H1 (cell line): ENCODE measurements at regions of chr12 and their contacts with region 1.

Region 1: DNA sequence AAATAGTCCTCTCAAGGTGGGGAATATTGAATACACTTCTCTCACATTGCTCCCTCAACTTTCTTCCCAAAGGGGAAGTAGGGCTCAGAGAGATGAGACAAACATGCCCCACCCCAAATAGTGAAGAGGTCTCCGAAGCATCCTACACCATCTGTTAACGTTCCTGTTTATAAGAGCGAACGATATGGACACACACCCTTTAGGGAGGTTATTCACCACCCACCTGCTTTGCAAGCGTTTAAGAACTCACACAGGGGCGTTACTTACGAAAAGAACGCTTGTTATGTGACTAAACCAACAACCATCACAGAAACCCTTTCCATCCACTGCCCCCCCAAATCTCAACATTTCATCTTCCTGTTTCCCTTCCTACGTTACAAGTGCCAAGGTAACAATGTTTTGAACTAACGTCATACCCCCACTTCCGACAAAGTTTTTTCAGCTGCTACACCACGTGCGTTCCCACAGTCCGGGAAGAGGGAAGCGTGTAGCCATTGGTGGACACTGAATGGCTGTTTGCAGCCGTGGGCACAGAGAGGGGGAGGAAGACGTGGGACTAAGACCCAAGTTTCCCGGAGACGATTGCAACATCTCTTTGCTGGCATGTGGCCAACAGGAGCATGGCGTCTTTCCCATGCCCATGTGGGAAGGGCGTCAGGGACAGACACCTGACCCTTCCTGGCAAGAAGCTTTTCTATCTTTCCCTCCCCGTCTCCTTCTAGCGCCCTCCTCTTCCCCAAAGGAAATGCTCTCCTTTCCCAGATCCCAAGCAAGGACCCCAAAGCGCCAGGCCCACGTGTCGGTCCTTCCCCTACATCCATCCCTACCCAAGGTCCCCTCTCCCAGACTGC is 1.2 kb downstream of the YBX3 start:
- DNase-seq: peak in 1 of 2 experiments; percentile 44
- H3K4me3 ChIP-seq: peak overlapping the region; percentile 96 to 99 (median 98)
- H3K27ac ChIP-seq: peak overlapping the region; percentile 88
- H3K4me1 ChIP-seq: peaks cover 7 to 26% (median 12%) of the 10 kb centered on the region in 4 experiments; a peak in 6 of 7 replicates
- H3K27me3 ChIP-seq: no peaks in the 10 kb centered on the region
- CTCF ChIP-seq: no peak
- EP300 ChIP-seq: no peak
- POLR2A ChIP-seq: peak; percentile 66 to 77
- RAD21 ChIP-seq: no peak

Region 2: DNA sequence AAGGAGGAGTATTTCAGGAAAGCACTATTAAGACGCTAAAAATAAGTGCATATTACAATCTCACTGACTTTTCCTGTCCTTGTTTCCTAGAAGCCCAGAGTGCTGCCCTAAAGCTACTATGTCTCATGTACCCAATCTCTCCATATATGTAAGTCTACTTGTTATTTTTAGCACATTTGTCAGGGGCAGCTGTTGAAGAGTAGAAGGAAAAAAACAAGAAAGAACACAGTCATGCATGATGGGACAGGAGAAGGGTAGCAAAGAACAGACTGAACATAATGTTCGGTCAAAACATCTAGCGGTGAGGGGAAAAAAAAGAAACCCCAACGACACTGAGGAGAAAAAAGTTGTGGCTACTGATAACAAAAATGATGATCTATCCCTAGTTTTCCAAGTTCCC is 13.0 kb before region 1 on chr12:
- CTCF ChIA-PET with region 1: no interaction called
- POLR2A ChIA-PET with region 1: interaction called, 24 read pairs
- DNase-seq: no peak
- H3K4me3 ChIP-seq: no peak overlapping the region
- H3K27ac ChIP-seq: no peak overlapping the region
- H3K4me1 ChIP-seq: no peaks in the 10 kb centered on the region
- H3K27me3 ChIP-seq: no peaks in the 10 kb centered on the region
- CTCF ChIP-seq: no peak
- EP300 ChIP-seq: no peak
- POLR2A ChIP-seq: no peak
- RAD21 ChIP-seq: no peak

Region 3: GRCh38 chr12:10732549-10732948 is 10.7 kb after region 1 on chr12:
- CTCF ChIA-PET with region 1: interaction called, 4 read pairs
- POLR2A ChIA-PET with region 1: interaction called, 19 read pairs
- DNase-seq: no peak
- H3K4me3 ChIP-seq: no peak overlapping the region
- H3K27ac ChIP-seq: no peak overlapping the region
- H3K4me1 ChIP-seq: no peaks in the 10 kb centered on the region
- H3K27me3 ChIP-seq: no peaks in the 10 kb centered on the region
- CTCF ChIP-seq: no peak
- EP300 ChIP-seq: no peak
- POLR2A ChIP-seq: no peak
- RAD21 ChIP-seq: no peak

Region 4: GRCh38 chr12:10740182-10740581 is 18.3 kb after region 1 on chr12:
- CTCF ChIA-PET with region 1: interaction called, 4 read pairs
- POLR2A ChIA-PET with region 1: interaction called, 12 read pairs
- DNase-seq: no peak
- H3K4me3 ChIP-seq: no peak overlapping the region
- H3K27ac ChIP-seq: no peak overlapping the region
- H3K4me1 ChIP-seq: peaks cover 0 to 2% (median 0%) of the 10 kb centered on the region in 4 experiments; a peak in 1 of 7 replicates
- H3K27me3 ChIP-seq: no peaks in the 10 kb centered on the region
- CTCF ChIP-seq: no peak
- EP300 ChIP-seq: no peak
- POLR2A ChIP-seq: no peak
- RAD21 ChIP-seq: no peak

Region 5: DNA sequence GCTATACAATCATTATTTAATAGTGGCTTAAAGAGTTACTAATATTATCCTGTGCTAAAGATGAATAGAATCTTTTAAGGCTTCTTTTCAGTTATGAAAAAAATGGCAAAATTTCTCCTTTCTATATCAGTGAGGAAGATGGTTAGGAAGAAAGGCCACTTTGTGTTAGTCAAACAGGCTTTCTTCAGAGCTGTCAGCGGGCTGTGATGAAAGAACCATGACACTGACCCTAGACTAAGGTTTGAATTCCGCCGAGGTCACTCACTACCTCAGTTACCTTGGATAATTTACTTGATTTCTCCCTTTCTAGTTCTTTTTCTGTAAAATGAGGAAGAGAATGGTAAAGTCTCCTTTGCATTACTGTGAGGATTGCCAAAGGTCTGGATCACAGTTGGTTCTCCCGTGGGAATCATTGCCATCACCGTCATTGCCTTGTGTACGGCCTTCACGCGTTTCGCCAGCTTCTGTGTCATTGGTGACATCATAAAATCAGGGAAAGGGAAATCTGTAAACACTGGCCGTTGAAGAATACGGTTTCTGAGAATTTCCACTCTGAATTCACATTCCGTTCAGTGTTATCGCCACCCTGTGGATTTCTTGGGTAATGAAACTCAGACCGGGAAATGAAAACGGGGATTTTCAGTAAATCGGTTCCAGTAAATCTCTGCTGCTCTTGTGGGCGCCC is 28.0 kb after region 1 on chr12:
- CTCF ChIA-PET with region 1: interaction called, 9 read pairs
- POLR2A ChIA-PET with region 1: interaction called, 11 read pairs
- DNase-seq: peak; percentile 34 to 73
- H3K4me3 ChIP-seq: peak overlapping the region in 3 of 4 experiments; percentile 6 to 51 (median 22); a peak in 4 of 8 replicates
- H3K27ac ChIP-seq: no peak overlapping the region
- H3K4me1 ChIP-seq: peaks cover 0 to 4% (median 0%) of the 10 kb centered on the region in 4 experiments; a peak in 1 of 7 replicates
- H3K27me3 ChIP-seq: no peaks in the 10 kb centered on the region
- CTCF ChIP-seq: peak; percentile 9 to 97 (median 88)
- EP300 ChIP-seq: 0 out of 3 replicates have a peak, but pooled peaks of 1 of the 2 experiments have one; percentile 11
- POLR2A ChIP-seq: no peak
- RAD21 ChIP-seq: peak; percentile 79 to 88

Region 6: GRCh38 chr12:10873378-10873777 is 151.5 kb after region 1 on chr12:
- CTCF ChIA-PET with region 1: no interaction called
- POLR2A ChIA-PET with region 1: no interaction called
- DNase-seq: no peak
- H3K4me3 ChIP-seq: no peak overlapping the region
- H3K27ac ChIP-seq: no peak overlapping the region
- H3K4me1 ChIP-seq: no peaks in the 10 kb centered on the region
- H3K27me3 ChIP-seq: no peaks in the 10 kb centered on the region
- CTCF ChIP-seq: no peak
- EP300 ChIP-seq: no peak
- POLR2A ChIP-seq: no peak
- RAD21 ChIP-seq: no peak

Region 7: DNA sequence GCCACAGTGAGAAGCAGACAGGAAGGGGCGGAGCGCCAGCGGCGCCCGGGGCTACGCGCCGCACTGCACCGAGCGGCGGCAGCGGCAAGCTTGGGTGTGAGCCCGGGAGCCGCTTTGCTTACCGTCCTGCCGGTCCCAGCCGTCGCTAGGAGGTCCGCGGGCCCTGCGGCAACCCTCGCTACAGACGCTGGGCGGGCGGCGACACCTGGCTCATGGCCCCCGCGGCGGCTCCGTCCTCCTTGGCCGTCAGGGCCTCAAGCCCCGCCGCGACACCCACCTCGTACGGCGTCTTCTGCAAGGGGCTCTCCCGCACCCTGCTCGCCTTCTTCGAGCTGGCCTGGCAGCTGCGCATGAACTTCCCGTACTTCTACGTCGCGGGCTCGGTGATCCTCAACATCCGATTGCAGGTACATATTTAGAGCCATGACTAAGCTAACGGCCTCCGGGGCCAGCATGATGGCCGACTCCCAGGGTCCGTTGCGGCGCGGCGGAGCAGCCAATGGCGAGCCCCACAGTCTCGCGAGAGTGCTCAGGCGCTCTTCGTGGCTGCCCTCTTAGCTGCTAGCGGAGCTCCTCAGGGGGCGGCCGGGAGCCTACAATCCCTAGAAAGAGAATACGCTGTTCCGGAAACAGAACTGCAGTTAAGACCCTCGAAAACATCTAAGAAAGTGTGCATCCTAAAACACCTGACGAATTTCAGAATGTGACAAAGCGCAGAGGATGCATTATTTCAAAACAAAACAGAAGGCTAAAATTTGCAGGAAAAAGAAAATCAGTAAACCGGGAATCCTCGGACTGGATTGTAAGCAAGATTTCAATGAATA is 449.5 kb after region 1 on chr12 and contains the start of gene SMIM10L1:
- CTCF ChIA-PET with region 1: no interaction called
- POLR2A ChIA-PET with region 1: interaction called, 11 read pairs
- DNase-seq: peak; percentile 82 to 88
- H3K4me3 ChIP-seq: peak within 1 kb of the TSS; percentile 76 to 100 (median 85)
- H3K27ac ChIP-seq: peak within 1 kb of the TSS; percentile 93
- H3K4me1 ChIP-seq: peaks cover 0 to 3% (median 0%) of the 10 kb centered on the region in 4 experiments; a peak in 1 of 7 replicates
- H3K27me3 ChIP-seq: no peaks in the 10 kb centered on the region
- CTCF ChIP-seq: no peak
- EP300 ChIP-seq: no peak
- POLR2A ChIP-seq: peak; percentile 82 to 96
- RAD21 ChIP-seq: no peak
- total RNA-seq, gene SMIM10L1: 14.2 and 15.1 TPM in 2 replicates